ENCODE measurements at regions of chr19 and their contacts with region 1.

Region 1: GRCh38 chr19:56199686-56200085 is 2.1 kb upstream of the ZSCAN5B start:
- DNase-seq: no peak
- ATAC-seq: no peak
- H3K4me3 ChIP-seq: no peak overlapping the region
- H3K27ac ChIP-seq: no peak overlapping the region
- H3K4me1 ChIP-seq: no peaks in the 10 kb centered on the region
- H3K27me3 ChIP-seq: 0 out of 2 replicates have a peak, but pooled peaks cover 2% of the 10 kb centered on the region
- CTCF ChIP-seq: no peak

Region 2: GRCh38 chr19:56090931-56091490 is 108.7 kb before region 1 on chr19:
- CTCF ChIA-PET with region 1: interaction called, 16 read pairs
- POLR2A ChIA-PET with region 1: no interaction called
- in situ Hi-C with region 1: no loop called
- intact Hi-C with region 1: no loop called
- DNase-seq: no peak
- ATAC-seq: peak; percentile 27
- H3K4me3 ChIP-seq: peak overlapping the region; percentile 46 to 69
- H3K27ac ChIP-seq: peak overlapping the region; percentile 94
- H3K4me1 ChIP-seq: peaks cover 22% of the 10 kb centered on the region
- H3K27me3 ChIP-seq: no peaks in the 10 kb centered on the region
- CTCF ChIP-seq: no peak

Measured in Panc1 (cell line).